Activated CD8-positive, alpha-beta T cell treated with anti-CD3 and anti-CD28 coated beads, Interleukin-2, amount 10 ng/mL, durations not matched to agents 7 days and 5 days (primary cell): ENCODE measurements at regions of chr3 and their contacts with region 1.

Region 1: DNA sequence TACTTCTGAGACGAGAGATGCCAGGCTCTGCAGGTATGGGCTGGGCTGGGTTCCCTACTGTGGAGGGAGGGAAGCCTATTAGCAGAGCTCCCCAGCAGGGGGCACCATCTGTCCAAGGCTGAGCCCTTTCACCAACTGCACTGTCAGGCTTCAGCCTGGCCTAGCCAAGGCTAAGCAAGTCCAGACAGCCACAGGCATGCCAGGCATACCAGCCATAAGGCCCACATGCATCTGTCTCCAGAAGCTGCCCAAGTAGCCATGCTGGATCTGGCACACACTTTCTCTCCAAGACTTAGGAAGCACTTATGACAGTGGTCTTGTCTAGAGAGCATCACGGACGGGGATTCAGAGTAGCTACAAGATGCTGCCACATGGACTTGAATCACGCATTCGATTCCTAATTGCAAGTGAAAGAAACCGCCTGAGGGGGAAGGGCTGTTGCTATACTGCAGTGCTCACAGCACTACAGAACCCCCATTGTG is 28.3 kb downstream of the RUVBL1 start:
- DNase-seq: peak; percentile 86
- ATAC-seq: peak; percentile 98
- H3K4me3 Mint-ChIP-seq: no peak overlapping the region
- H3K27ac Mint-ChIP-seq: peak overlapping the region; percentile 82
- H3K4me1 Mint-ChIP-seq: peaks cover 24% of the 10 kb centered on the region
- H3K27me3 Mint-ChIP-seq: no peaks in the 10 kb centered on the region

Region 2: DNA sequence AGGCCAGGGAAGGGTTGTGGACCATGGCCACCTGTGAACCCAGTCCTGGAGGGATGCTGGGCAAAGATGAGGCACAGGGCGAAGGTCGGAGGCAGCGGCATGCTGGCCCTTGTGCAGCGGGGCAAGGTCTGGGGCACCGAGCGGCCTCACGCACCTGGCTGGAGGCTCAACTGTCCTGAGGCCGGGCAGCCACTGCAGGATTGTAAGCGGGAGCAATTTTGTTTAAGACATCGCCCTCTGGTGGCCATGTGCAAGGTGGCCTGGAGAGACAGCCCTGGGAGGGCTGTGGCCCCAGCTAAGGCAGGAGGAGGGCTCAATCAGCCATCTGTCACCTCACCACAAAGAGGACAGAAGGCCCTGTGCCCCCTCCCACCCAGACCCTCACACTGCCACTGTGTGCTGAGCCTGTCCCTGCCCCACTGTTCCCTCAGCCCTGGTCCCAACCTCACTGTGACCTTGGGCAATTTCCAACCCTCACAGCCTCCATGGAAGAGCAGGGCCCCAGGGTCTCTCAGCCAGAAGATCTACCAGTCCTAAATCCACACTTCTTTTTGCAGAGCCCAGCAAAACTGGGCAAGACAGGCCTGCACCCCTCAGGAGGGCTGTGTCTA is 551.0 kb before region 1 on chr3:
- CTCF ChIA-PET with region 1: no interaction called
- POLR2A ChIA-PET with region 1: no interaction called
- DNase-seq: peak; percentile 73
- ATAC-seq: peak; percentile 67
- H3K4me3 Mint-ChIP-seq: no peak overlapping the region
- H3K27ac Mint-ChIP-seq: no peak overlapping the region
- H3K4me1 Mint-ChIP-seq: peaks cover 8% of the 10 kb centered on the region
- H3K27me3 Mint-ChIP-seq: peaks cover 4% of the 10 kb centered on the region

Region 3: DNA sequence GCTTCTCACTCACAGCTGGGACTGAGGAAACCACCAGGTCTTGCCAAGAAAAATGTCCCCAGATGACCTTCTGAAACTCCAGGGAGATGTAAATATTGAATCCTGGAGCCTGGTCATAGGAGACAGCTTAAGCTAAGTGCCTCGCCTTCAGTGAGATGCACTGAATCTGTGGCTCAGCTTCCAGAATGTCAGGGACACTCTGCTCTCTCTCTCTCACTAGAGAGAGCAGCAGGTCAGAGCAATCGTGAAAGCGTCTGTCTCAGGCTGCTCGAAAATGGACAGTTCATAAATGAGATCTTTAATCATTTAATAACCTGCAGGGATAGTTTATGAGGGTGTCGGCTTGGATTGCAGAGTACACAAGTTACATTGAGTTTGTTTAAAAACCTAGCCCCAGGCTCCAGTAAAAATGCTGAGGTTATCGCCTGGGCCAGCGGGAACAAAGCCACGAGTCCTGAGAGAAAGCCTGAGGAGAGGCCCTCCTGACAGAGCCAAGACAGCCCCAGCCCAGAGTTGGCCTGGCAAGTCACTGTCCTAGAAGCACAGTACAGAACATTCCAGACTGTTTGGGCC is 10.8 kb before region 1 on chr3:
- CTCF ChIA-PET with region 1: interaction called, 10 read pairs
- POLR2A ChIA-PET with region 1: no interaction called
- DNase-seq: no peak
- ATAC-seq: no peak
- H3K4me3 Mint-ChIP-seq: no peak overlapping the region
- H3K27ac Mint-ChIP-seq: no peak overlapping the region
- H3K4me1 Mint-ChIP-seq: peaks cover 7% of the 10 kb centered on the region
- H3K27me3 Mint-ChIP-seq: no peaks in the 10 kb centered on the region

Region 4: GRCh38 chr3:128112357-128112968 is 17.2 kb after region 1 on chr3:
- CTCF ChIA-PET with region 1: interaction called, 32 read pairs
- POLR2A ChIA-PET with region 1: interaction called, 3 read pairs
- DNase-seq: peak; percentile 73
- ATAC-seq: peak; percentile 88
- H3K4me3 Mint-ChIP-seq: peak overlapping the region; percentile 43
- H3K27ac Mint-ChIP-seq: peak overlapping the region; percentile 98
- H3K4me1 Mint-ChIP-seq: peaks cover 49% of the 10 kb centered on the region
- H3K27me3 Mint-ChIP-seq: no peaks in the 10 kb centered on the region

Region 5: GRCh38 chr3:128123538-128124368 is 28.5 kb after region 1 on chr3 and contains the start of gene RUVBL1:
- CTCF ChIA-PET with region 1: interaction called, 38 read pairs
- POLR2A ChIA-PET with region 1: interaction called, 3 read pairs
- DNase-seq: peak; percentile 99
- ATAC-seq: peak; percentile 99
- H3K4me3 Mint-ChIP-seq: peak within 1 kb of the TSS; percentile 98
- H3K27ac Mint-ChIP-seq: peak within 1 kb of the TSS; percentile 94
- H3K4me1 Mint-ChIP-seq: peaks cover 22% of the 10 kb centered on the region
- H3K27me3 Mint-ChIP-seq: no peaks in the 10 kb centered on the region
- total RNA-seq, gene RUVBL1: 57.3 to 57.4 TPM

Region 6: GRCh38 chr3:128133273-128134084 is 38.2 kb after region 1 on chr3:
- CTCF ChIA-PET with region 1: interaction called, 138 read pairs
- POLR2A ChIA-PET with region 1: no interaction called
- DNase-seq: peak; percentile 60
- ATAC-seq: peak; percentile 75
- H3K4me3 Mint-ChIP-seq: no peak overlapping the region
- H3K27ac Mint-ChIP-seq: no peak overlapping the region
- H3K4me1 Mint-ChIP-seq: no peaks in the 10 kb centered on the region
- H3K27me3 Mint-ChIP-seq: peaks cover 19% of the 10 kb centered on the region

Region 7: GRCh38 chr3:128322066-128323022 is 227.1 kb after region 1 on chr3:
- CTCF ChIA-PET with region 1: interaction called, 30 read pairs
- POLR2A ChIA-PET with region 1: no interaction called
- DNase-seq: peak; percentile 67
- ATAC-seq: peak; percentile 59
- H3K4me3 Mint-ChIP-seq: no peak overlapping the region
- H3K27ac Mint-ChIP-seq: no peak overlapping the region
- H3K4me1 Mint-ChIP-seq: peaks cover 22% of the 10 kb centered on the region
- H3K27me3 Mint-ChIP-seq: no peaks in the 10 kb centered on the region